SK-N-SH (cell line): ENCODE measurements at regions of chr11 and their contacts with region 1.

Region 1: GRCh38 chr11:113730887-113731726 is 25.0 kb upstream of the TMPRSS5 start:
- DNase-seq: peak; percentile 62
- H3K4me3 ChIP-seq: no peak overlapping the region
- H3K27ac ChIP-seq: peak overlapping the region in 1 of 2 experiments; percentile 9; a peak in 1 of 4 replicates
- H3K4me1 ChIP-seq: peaks cover 0 to 2% of the 10 kb centered on the region in 2 experiments; a peak in 2 of 4 replicates
- H3K27me3 ChIP-seq: no peaks in the 10 kb centered on the region
- CTCF ChIP-seq: peak; percentile 57
- EP300 ChIP-seq: no peak
- RAD21 ChIP-seq: peak; percentile 99

Region 2: DNA sequence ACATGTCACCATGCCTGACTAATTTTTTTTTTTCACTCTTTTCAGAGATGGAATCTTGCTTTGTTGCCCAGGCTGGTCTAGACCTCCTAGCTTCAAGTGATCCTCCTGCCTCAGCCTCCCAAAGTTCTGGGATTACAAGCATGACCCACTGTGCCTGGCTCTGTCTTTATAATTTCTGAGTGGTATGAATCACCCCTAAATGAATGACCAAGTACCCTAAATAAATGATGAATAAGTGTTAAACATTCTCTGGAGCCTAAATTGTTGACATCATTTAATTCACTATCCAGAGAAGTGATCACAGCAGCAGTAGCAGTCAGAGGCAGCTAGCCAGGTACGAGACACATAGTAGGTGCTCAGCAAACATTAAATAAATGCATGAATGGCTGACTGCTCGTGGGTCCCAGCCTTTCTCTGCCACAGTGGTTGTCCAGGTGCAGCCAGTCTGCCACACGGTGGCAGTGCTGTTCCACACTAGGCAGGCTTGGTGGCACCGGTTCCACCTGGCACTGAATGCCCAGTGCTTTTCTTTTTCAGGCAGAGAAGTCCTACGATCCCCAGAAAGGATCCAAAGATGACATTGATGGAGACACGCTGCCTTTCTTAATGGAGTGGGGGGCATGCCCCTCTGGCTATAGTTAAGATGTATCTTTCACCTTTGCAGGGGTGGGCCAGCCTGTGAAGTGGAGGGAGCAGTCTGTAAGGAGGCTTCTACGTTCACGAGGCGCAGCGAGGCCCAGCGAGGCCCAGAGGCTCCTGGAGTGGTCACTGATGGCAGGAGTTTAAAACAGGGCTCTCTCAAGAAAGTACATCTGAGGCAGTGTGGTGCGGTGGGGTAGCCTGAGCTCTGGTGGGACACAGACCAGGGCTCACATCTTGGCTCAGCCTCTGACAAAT is 425.4 kb before region 1 on chr11:
- CTCF ChIA-PET with region 1: interaction called, 66 read pairs
- POLR2A ChIA-PET with region 1: no interaction called
- DNase-seq: peak; percentile 81
- H3K4me3 ChIP-seq: peak overlapping the region in 1 of 2 experiments; percentile 14; a peak in 1 of 4 replicates
- H3K27ac ChIP-seq: no peak overlapping the region
- H3K4me1 ChIP-seq: peaks cover 0 to 2% of the 10 kb centered on the region in 2 experiments; a peak in 1 of 4 replicates
- H3K27me3 ChIP-seq: no peaks in the 10 kb centered on the region
- CTCF ChIP-seq: peak; percentile 94
- EP300 ChIP-seq: no peak
- RAD21 ChIP-seq: peak; percentile 99

Region 3: DNA sequence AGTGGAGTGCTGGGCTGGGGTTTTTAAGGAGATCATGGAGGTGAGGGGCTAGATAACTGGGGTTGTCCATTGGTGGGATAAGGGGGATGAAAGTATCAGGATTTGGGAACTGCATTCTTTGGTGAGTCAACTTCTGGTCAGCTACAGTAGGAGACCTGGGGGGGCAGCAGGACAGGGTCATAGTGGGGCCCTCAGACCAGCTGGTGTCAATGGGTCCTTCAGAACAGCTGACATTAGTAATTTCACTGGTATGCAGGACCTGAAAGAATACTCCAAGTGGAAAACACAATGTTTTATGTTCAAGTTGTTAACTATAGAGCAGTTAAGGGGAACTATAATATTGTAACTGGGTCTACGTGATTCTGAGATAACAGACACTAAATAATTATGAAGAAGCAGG is 419.6 kb before region 1 on chr11:
- CTCF ChIA-PET with region 1: interaction called, 66 read pairs
- POLR2A ChIA-PET with region 1: interaction called, 3 read pairs
- DNase-seq: no peak
- H3K4me3 ChIP-seq: no peak overlapping the region
- H3K27ac ChIP-seq: no peak overlapping the region
- H3K4me1 ChIP-seq: peaks cover 0 to 13% of the 10 kb centered on the region in 2 experiments; a peak in 2 of 4 replicates
- H3K27me3 ChIP-seq: no peaks in the 10 kb centered on the region
- CTCF ChIP-seq: no peak
- EP300 ChIP-seq: no peak
- RAD21 ChIP-seq: no peak

Region 4: DNA sequence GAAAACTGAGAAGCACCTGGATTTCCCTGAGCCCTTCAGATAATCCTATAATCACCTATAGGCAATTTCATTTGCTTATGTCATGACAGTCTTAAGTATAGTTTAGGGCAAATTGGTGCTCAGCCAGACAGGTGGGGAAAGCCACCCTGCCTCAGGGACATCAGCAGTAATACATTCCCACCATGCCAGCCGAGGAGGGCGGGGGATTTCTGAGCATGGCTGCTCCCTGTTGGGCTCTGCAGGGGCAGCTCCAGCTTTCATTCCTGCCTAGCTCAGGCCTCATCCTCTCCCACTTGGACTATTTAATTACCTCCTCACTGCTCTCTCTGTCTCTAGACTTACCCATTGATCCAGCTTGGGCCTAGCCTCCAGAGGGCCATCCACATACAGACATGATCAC is 246.9 kb before region 1 on chr11:
- CTCF ChIA-PET with region 1: no interaction called
- POLR2A ChIA-PET with region 1: no interaction called
- DNase-seq: no peak
- H3K4me3 ChIP-seq: no peak overlapping the region
- H3K27ac ChIP-seq: no peak overlapping the region
- H3K4me1 ChIP-seq: no peaks in the 10 kb centered on the region; a peak in 1 of 4 replicates
- H3K27me3 ChIP-seq: no peaks in the 10 kb centered on the region
- CTCF ChIP-seq: no peak
- EP300 ChIP-seq: no peak
- RAD21 ChIP-seq: no peak

Region 5: GRCh38 chr11:113553235-113553634 is 177.9 kb before region 1 on chr11:
- CTCF ChIA-PET with region 1: interaction called, 29 read pairs
- POLR2A ChIA-PET with region 1: no interaction called
- DNase-seq: no peak
- H3K4me3 ChIP-seq: no peak overlapping the region
- H3K27ac ChIP-seq: no peak overlapping the region; a peak in 2 of 4 replicates
- H3K4me1 ChIP-seq: peaks cover 0 to 35% of the 10 kb centered on the region in 2 experiments; a peak in 3 of 4 replicates
- H3K27me3 ChIP-seq: no peaks in the 10 kb centered on the region
- CTCF ChIP-seq: no peak
- EP300 ChIP-seq: no peak
- RAD21 ChIP-seq: no peak

Region 6: GRCh38 chr11:113577356-113578032 is 153.6 kb before region 1 on chr11:
- CTCF ChIA-PET with region 1: interaction called, 11 read pairs
- POLR2A ChIA-PET with region 1: no interaction called
- DNase-seq: peak; percentile 44
- H3K4me3 ChIP-seq: no peak overlapping the region
- H3K27ac ChIP-seq: peak overlapping the region in 1 of 2 experiments; percentile 90; a peak in 2 of 4 replicates
- H3K4me1 ChIP-seq: peaks cover 0 to 58% of the 10 kb centered on the region in 2 experiments; a peak in 1 of 4 replicates
- H3K27me3 ChIP-seq: no peaks in the 10 kb centered on the region
- CTCF ChIP-seq: no peak
- EP300 ChIP-seq: no peak
- RAD21 ChIP-seq: no peak

Region 7: DNA sequence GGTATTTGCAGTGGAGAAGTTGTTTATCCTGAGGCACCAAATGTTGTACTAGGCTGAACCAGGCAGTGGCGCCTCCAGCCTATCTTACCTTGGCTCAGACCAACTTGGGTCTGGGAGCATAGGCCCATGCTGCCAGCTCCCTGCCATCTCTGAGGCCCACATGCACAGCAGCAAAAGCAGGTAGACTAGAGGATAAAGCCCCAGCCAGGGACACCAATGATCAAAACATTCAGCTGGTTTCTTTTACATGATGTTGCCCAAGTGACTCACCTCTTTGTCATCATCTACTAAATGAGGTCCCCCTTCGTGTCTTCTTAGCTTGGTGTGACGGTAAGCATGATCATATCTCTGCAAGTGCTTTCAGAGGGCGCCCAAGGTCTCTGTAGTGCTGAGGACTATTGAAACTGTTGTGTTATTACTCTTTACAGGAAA is 143.8 kb before region 1 on chr11:
- CTCF ChIA-PET with region 1: interaction called, 13 read pairs
- POLR2A ChIA-PET with region 1: no interaction called
- DNase-seq: no peak
- H3K4me3 ChIP-seq: no peak overlapping the region
- H3K27ac ChIP-seq: no peak overlapping the region; a peak in 1 of 4 replicates
- H3K4me1 ChIP-seq: peaks cover 0 to 23% of the 10 kb centered on the region in 2 experiments; a peak in 2 of 4 replicates
- H3K27me3 ChIP-seq: no peaks in the 10 kb centered on the region
- CTCF ChIP-seq: no peak
- EP300 ChIP-seq: no peak
- RAD21 ChIP-seq: no peak

Region 8: DNA sequence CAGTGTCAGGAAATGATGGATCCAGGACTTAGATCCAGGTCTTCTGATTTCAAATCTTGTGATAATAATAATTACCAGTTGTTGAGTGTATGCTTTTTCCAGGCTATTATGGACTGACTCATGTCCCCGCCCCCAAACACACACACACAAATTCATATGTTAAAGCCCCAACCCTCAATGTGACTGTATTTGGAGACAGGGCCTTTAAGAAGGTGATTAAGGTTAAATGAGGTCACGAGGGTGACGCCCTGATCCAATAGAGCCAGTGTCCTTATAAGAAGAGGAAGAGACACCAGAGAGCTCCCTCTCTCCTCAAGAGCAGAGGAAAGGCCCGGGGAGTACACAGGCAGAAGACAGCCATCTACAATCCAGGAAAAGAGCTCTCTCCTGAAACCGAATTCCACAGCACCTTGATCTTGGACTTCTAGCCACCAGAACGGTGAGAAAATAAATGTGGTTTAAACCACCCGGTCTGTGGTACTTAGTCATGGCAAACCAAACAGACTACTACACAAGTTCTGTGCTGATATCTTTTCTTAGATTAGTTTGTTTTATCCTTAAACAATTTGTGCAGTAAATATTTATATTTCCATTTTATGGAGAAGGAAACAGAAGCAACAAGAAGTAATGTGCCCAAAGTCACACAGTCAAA is 33.2 kb before region 1 on chr11:
- CTCF ChIA-PET with region 1: no interaction called
- POLR2A ChIA-PET with region 1: no interaction called
- DNase-seq: no peak
- H3K4me3 ChIP-seq: no peak overlapping the region
- H3K27ac ChIP-seq: no peak overlapping the region
- H3K4me1 ChIP-seq: peaks cover 0 to 9% of the 10 kb centered on the region in 2 experiments; a peak in 1 of 4 replicates
- H3K27me3 ChIP-seq: no peaks in the 10 kb centered on the region
- CTCF ChIP-seq: no peak
- EP300 ChIP-seq: no peak
- RAD21 ChIP-seq: no peak